ENCODE measurements at regions of chr4 and their contacts with region 1.

Region 1: DNA sequence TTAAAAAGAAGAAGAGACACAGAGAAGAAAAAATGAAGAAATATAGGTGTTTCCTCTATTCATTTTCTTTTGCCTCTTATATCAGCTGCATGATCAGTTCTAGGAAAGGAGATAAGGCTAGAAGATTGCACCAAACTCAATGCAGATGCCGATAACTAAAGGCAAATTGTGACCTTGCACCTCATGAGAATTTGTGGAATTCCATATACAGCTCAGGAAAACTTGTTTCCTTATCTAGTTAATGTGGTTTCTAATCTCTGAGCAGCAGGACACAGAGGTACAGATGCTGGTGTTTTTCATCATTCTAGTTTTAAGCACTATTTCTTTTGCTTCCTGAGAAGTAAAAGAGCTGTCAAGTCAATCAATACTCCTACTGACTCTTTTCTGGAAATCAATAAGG is 104.6 kb upstream of the NWD2 start:
- DNase-seq: no peak
- H3K4me3 Mint-ChIP-seq: no peak overlapping the region
- H3K27ac Mint-ChIP-seq: no peak overlapping the region
- H3K4me1 Mint-ChIP-seq: no peaks in the 10 kb centered on the region
- H3K27me3 Mint-ChIP-seq: peaks cover 4% of the 10 kb centered on the region
- CTCF ChIP-seq: no peak

Region 2: GRCh38 chr4:36921474-36922254 is 218.3 kb before region 1 on chr4:
- CTCF ChIA-PET with region 1: no interaction called
- intact Hi-C with region 1: loop called (anchors 10 kb)
- DNase-seq: no peak
- H3K4me3 Mint-ChIP-seq: no peak overlapping the region
- H3K27ac Mint-ChIP-seq: no peak overlapping the region
- H3K4me1 Mint-ChIP-seq: no peaks in the 10 kb centered on the region
- H3K27me3 Mint-ChIP-seq: peaks cover 9% of the 10 kb centered on the region
- CTCF ChIP-seq: no peak

Region 3: GRCh38 chr4:37365888-37366287 is 225.9 kb after region 1 on chr4:
- CTCF ChIA-PET with region 1: no interaction called
- intact Hi-C with region 1: no loop called
- DNase-seq: no peak
- H3K4me3 Mint-ChIP-seq: no peak overlapping the region
- H3K27ac Mint-ChIP-seq: no peak overlapping the region
- H3K4me1 Mint-ChIP-seq: no peaks in the 10 kb centered on the region
- H3K27me3 Mint-ChIP-seq: no peaks in the 10 kb centered on the region
- CTCF ChIP-seq: no peak

Region 4: DNA sequence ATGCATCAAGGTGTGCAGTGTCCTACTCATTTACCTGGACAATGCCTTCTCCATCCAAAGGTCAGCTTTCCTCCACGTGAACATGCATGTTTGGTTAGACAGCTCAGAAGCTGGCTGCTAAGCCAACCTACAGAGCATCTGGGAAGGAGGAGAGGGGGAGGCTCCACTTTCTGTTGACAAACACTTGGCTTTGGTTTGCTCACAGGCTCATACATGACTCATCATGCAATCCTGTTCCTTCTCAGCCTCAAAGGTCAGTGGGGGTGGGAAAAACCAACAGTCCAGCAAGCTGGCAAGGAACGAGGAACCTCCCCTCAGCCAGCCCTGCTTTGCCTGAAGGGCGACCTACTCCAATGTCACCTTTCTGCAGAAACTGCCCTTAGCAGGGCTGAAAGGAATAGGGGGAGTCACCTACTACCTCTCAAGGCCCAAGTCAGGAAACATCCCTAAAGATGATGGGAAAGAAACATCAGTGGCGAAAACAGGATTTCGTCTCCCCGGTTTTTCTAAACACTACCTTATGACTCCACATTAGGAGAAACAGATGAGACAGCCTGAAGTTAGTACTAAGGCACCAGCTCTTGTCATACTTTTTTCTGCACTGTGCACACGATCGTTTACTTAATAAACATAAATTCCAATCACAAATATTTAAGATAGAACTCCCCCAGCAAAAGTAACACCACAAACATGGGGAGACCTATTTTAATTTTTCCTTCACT is 508.3 kb after region 1 on chr4:
- CTCF ChIA-PET with region 1: no interaction called
- intact Hi-C with region 1: no loop called
- DNase-seq: peak; percentile 77
- H3K4me3 Mint-ChIP-seq: no peak overlapping the region
- H3K27ac Mint-ChIP-seq: no peak overlapping the region
- H3K4me1 Mint-ChIP-seq: peaks cover 17% of the 10 kb centered on the region
- H3K27me3 Mint-ChIP-seq: no peaks in the 10 kb centered on the region
- CTCF ChIP-seq: no peak